ENCODE measurements at regions of chr7 and their contacts with region 1.

Region 1: GRCh38 chr7:73718905-73719805 is at the start of gene STX1A:
- DNase-seq: peak; percentile 72
- ATAC-seq: peak; percentile 85
- H3K4me3 Mint-ChIP-seq: peak within 1 kb of the TSS; percentile 79
- H3K27ac Mint-ChIP-seq: no peak within 1 kb of the TSS
- H3K4me1 Mint-ChIP-seq: peaks cover 21% of the 10 kb centered on the region
- H3K27me3 Mint-ChIP-seq: peaks cover 28% of the 10 kb centered on the region
- CTCF ChIP-seq: no peak
- total RNA-seq, gene STX1A: 1.8 and 2.1 TPM in 2 replicates

Region 2: GRCh38 chr7:73683056-73683964 is 35.8 kb before region 1 on chr7 and contains the starts of genes BUD23 and DNAJC30:
- CTCF ChIA-PET with region 1: no interaction called
- POLR2A ChIA-PET with region 1: no interaction called
- intact Hi-C with region 1: loop called (anchors 1 kb)
- DNase-seq: peak; percentile 81
- ATAC-seq: peak; percentile 98
- H3K4me3 Mint-ChIP-seq: peak within 1 kb of the TSS; percentile 97
- H3K27ac Mint-ChIP-seq: peak within 1 kb of the TSS; percentile 95
- H3K4me1 Mint-ChIP-seq: peaks cover 29% of the 10 kb centered on the region
- H3K27me3 Mint-ChIP-seq: no peaks in the 10 kb centered on the region
- CTCF ChIP-seq: no peak
- total RNA-seq, gene BUD23: 69.0 and 74.8 TPM in 2 replicates
- total RNA-seq, gene DNAJC30: 13.7 and 14.2 TPM in 2 replicates

Region 3: DNA sequence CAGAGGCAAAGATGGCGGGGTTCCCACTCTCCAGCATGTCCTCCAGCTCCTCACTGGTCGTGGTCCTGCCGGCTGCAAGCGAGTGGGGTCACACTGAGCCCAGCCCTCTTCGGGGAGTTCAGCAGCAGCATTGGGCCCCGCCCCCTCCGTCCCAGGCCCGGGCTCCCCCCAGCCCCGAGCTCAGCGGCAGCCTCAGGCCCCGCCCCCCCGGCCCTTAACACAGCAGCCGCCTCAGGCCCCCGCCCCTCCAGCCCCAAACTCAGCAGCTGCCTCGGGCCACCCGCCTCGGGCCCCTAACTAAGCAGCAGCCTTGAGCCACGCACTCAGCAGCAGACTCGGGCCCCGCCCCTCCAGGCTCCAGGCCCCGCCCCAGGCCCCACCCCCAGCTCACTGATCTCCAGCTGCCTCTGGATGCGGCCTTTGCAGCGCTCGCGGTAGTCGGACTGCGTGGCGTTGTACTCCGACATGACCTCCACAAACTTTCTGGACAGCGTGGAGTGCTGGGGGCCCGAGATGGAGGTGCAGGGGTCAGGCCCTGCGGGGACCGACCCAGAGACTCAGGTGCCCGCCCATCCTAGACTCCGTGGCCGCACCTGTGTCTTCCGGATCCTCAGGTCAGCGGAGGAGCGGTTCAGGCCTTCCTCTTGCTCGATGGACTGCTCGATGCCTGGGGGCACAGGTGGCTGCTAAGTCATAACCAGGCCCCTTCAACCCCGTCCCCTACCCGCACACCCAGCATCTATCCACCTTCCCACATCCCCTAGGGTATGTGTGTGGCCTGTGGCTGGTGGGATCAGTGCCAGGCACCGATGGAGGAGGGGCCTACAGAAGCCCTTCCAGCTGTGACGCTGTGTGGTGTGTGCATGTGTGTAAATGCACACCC is 15.2 kb before region 1 on chr7:
- CTCF ChIA-PET with region 1: no interaction called
- POLR2A ChIA-PET with region 1: interaction called, 12 read pairs
- intact Hi-C with region 1: loop called (anchors 1 kb)
- DNase-seq: no peak
- ATAC-seq: peak; percentile 67
- H3K4me3 Mint-ChIP-seq: no peak overlapping the region
- H3K27ac Mint-ChIP-seq: no peak overlapping the region
- H3K4me1 Mint-ChIP-seq: peaks cover 16% of the 10 kb centered on the region
- H3K27me3 Mint-ChIP-seq: peaks cover 8% of the 10 kb centered on the region
- CTCF ChIP-seq: no peak

Region 4: GRCh38 chr7:74026903-74027551 is 307.9 kb after region 1 on chr7:
- CTCF ChIA-PET with region 1: no interaction called
- POLR2A ChIA-PET with region 1: no interaction called
- intact Hi-C with region 1: no loop called
- DNase-seq: peak; percentile 62
- ATAC-seq: peak; percentile 85
- H3K4me3 Mint-ChIP-seq: no peak overlapping the region
- H3K27ac Mint-ChIP-seq: no peak overlapping the region
- H3K4me1 Mint-ChIP-seq: peaks cover 8% of the 10 kb centered on the region
- H3K27me3 Mint-ChIP-seq: peaks cover 56% of the 10 kb centered on the region
- CTCF ChIP-seq: peak; percentile 76